Activated naive CD8-positive, alpha-beta T cell treated with anti-CD3 and anti-CD28 coated beads, Interleukin-2, amount 10 ng/mL, durations not matched to agents 7 days and 5 days (primary cell): ENCODE measurements at regions of chr14 and their contacts with region 1.

Region 1: GRCh38 chr14:105480952-105481801 is 5.5 kb upstream of the CRIP1 start:
- DNase-seq: peak; percentile 94
- ATAC-seq: peak; percentile 50
- H3K4me3 Mint-ChIP-seq: peak overlapping the region; percentile 64
- H3K27ac Mint-ChIP-seq: peak overlapping the region; percentile 97
- H3K4me1 Mint-ChIP-seq: peaks cover 25% of the 10 kb centered on the region
- H3K27me3 Mint-ChIP-seq: peaks cover 20% of the 10 kb centered on the region

Region 2: DNA sequence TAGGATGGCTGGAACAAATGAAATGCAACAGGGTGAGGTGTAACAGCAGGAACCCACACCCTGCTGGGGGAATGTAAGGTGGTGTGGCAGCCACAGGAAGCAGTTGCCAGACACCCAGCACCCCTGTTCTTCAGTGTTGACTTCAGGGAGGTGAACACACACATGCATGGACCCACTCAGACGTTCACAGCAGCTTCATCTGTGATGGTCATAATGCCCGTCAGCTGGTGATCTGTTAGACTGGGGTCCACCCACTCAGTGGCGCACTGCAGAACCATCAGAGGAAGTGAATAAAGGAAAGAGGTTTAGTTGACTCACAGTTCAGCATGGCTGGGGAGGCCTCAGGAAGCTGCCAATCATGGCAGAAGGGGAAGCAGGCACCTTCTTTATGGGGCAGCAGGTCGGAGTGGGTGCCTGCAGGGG is 105.5 kb before region 1 on chr14:
- POLR2A ChIA-PET with region 1: interaction called, 12 read pairs
- DNase-seq: peak; percentile 51
- ATAC-seq: peak; percentile 69
- H3K4me3 Mint-ChIP-seq: peak overlapping the region; percentile 68
- H3K27ac Mint-ChIP-seq: peak overlapping the region; percentile 90
- H3K4me1 Mint-ChIP-seq: peaks cover 12% of the 10 kb centered on the region
- H3K27me3 Mint-ChIP-seq: no peaks in the 10 kb centered on the region

Region 3: GRCh38 chr14:105527661-105528581 is 46.7 kb after region 1 on chr14:
- POLR2A ChIA-PET with region 1: interaction called, 18 read pairs
- DNase-seq: peak; percentile 92
- ATAC-seq: peak; percentile 62
- H3K4me3 Mint-ChIP-seq: peak overlapping the region; percentile 78
- H3K27ac Mint-ChIP-seq: peak overlapping the region; percentile 76
- H3K4me1 Mint-ChIP-seq: peaks cover 17% of the 10 kb centered on the region
- H3K27me3 Mint-ChIP-seq: peaks cover 30% of the 10 kb centered on the region